ENCODE measurements at regions of chr12 and their contacts with region 1.

Region 1: GRCh38 chr12:32365473-32366064 is 33.8 kb upstream of the FGD4 start:
- ATAC-seq: peak in 5 of 8 experiments; percentile 51 to 79 (median 65)
- H3K4me3 ChIP-seq: no peak overlapping the region
- H3K27ac ChIP-seq: no peak overlapping the region
- H3K4me1 ChIP-seq: no peaks in the 10 kb centered on the region

Region 2: GRCh38 chr12:32659908-32660440 is 294.4 kb after region 1 on chr12:
- in situ Hi-C with region 1: loop called in 4 of 9 experiments (anchors 10 to 25 kb)
- ATAC-seq: no peak
- H3K4me3 ChIP-seq: no peak overlapping the region
- H3K27ac ChIP-seq: no peak overlapping the region
- H3K4me1 ChIP-seq: no peaks in the 10 kb centered on the region

Region 3: DNA sequence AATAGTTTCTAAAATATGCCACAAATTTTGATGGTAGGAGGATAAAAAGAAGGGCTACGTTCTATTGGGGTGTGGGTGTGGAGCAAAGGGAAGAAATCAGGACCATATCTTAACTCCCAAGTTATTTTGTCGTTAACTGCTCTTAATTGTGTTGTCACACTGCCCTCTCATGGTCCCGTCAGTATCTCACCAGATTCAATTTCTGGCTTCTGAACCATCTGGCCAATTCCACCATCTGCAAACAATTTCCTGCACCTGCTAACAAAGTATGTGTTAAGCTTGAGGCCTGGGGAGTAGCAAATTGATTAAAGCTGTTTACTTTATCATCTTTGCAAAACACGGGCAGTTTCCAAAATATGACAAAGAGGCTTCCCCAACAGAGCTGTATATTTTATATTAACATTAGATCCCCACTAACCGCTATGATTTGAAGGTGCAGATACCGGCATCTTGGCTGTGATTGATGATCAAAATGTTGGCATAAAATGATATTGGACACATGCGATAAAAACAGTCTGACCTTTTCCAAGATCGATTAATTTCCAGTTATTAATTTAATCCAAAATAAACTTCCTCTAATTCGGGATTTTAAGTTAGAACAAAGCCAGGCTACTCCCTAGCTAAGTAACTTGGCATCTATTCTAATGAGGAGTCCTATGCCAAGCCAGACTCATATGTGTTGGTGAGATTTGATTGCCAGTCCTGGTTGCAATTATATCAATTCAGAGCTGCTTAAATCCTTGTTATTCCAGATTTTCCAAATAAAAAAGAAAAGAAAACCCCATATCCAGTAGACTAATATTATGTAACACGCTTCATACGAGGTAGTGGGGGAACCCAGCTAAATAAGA is 306.6 kb after region 1 on chr12:
- in situ Hi-C with region 1: loop called in 4 of 9 experiments (anchors 10 to 25 kb)
- ATAC-seq: peak; percentile 49 to 97 (median 66)
- H3K4me3 ChIP-seq: no peak overlapping the region
- H3K27ac ChIP-seq: no peak overlapping the region
- H3K4me1 ChIP-seq: no peaks in the 10 kb centered on the region

Measured in motor neuron (in vitro differentiated cells).